ENCODE measurements at regions of chr6 and their contacts with region 1.

Region 1: DNA sequence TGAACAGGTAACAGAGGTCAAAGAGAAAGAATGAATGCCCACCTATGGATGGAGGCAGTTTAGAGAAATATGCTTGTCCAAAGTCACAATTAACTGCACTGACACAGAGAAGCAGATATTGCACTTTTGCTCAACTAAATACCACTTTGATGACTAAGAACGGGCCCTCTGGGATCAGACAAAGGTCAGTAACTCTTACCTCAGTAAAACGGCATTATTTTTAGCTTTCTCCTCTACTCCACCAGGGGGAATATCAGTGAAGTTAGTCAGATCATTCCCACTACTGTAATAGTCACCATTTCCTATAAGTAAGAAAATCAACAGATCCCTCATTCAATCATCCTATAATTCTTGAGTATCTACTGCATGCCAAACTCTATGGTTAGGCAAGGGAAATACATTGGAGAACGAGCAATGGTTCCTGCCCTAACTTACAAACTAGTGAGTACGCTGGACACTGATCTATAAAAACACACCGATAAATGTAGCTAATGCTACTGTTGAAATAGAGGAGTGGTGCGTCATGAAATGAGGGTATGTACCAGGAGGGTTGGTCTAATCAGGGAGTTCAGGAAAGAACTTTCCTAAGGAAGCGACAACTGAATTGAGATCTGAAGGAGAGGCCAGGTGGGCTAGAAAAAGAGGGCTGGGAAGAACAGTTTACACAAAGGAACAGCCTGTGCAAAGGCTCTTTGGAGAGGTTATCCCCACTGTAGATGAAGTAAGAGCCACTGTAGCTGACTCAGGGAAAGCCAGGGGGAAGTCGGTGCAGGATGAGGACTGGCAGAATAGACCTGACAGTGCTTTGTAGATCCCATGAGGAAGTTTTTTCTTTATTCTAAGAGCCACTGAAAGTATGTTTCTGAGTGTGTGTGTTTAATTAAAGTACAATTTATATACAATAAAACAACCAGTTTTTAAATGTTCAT is 9.2 kb downstream of the ECI2 start:
- DNase-seq: no peak
- ATAC-seq: peak; percentile 63

Region 2: GRCh38 chr6:3929281-3929798 is 196.9 kb before region 1 on chr6:
- intact Hi-C with region 1: no loop called
- DNase-seq: peak; percentile 53
- ATAC-seq: no peak

Region 3: DNA sequence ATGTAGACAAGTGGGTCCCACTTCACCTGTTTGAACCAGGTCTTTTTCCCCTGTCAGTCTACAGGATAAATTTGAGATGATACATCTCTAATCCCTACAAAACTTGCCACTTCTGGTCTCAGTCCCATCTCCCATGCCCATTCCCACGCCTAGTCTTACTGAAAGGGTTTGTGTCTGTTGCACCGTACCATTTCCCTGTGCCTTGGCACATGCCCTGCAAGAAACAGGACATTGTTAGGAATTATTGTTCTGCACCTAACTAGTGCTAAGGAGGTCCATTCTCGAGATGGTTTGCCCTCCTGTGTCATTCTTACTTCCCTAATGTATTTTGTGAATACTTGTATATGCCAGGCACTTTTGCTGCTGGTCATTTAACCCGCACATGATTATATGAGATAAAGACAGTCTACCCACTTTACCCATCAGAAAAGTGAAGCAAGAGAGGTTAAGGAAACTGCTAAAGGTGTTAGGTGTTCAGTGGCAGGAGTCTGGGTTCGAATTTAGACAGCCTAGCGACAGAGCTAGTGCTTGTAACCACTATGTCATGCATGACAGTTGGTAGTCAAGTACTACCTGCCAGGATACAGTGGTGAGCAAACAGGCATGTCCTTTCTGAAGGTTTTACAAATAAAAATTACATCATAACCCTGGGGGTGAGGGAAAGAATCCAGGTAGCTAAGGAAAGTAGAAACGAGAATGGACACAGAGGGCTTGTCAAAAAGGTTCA is 60.0 kb before region 1 on chr6:
- intact Hi-C with region 1: loop called (anchors 10 kb)
- DNase-seq: no peak
- ATAC-seq: peak; percentile 22

Measured in Right ventricle myocardium superior (tissue), 1 donor.